ENCODE measurements at regions of chr16 and their contacts with region 1.

Region 1: DNA sequence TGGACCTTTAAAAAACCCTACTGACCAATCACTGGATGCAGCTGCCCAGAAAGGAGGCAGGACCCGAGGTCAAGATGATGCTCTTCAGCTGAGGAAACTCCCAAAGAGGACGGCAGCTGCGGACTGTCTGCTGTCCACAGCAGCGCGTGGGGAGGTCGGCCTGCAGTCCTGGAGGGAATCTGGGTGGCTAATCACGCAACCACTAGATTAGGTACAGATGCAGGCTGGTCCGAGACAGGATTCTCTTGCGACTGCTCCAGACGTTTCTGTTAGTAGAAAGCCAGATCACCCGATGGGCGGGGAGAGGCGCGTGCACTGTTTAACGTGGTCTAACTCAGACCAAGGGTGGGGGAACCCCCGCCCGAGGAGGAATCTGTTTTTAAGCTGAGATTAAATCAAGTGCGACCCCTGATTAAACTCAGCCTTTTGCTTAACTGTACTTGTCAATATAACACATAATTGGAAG is 8.8 kb downstream of the CTRB2 start:
- DNase-seq: no peak
- ATAC-seq: no peak; the same call in 1 of the 2 replicates
- H3K4me3 Mint-ChIP-seq: no peak overlapping the region
- H3K27ac Mint-ChIP-seq: no peak overlapping the region
- H3K4me1 Mint-ChIP-seq: peaks cover 9% of the 10 kb centered on the region
- H3K27me3 Mint-ChIP-seq: no peaks in the 10 kb centered on the region; the same call in 1 of the 2 replicates
- CTCF ChIP-seq: no peak

Region 2: DNA sequence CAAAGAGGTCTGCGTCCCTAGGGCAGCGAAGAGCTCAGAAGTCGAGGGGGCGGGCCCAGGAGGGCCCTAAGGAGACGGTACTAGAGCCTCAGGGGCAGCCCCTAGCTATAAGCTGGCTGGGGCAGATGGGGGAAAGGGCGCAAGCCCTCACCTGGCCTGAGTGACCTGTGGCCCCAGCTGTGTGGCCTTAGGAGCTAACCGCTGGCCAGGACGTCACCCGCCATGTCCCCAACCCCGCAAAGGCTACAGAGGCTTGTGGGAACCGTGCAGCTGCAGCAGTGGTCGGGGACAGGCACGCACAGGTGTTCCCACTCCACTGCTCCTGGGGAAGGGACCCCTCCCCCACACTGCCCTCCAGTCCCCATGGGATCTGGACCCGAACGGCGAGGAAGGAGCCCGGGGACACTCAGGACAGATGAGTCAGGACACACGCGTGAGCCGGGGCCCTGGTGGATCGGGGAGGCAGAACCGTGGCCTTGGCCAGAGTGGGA is 10.8 kb after region 1 on chr16:
- CTCF ChIA-PET with region 1: interaction called, 14 read pairs
- POLR2A ChIA-PET with region 1: no interaction called
- DNase-seq: no peak
- ATAC-seq: peak; percentile 22
- H3K4me3 Mint-ChIP-seq: no peak overlapping the region
- H3K27ac Mint-ChIP-seq: no peak overlapping the region
- H3K4me1 Mint-ChIP-seq: no peaks in the 10 kb centered on the region
- H3K27me3 Mint-ChIP-seq: no peaks in the 10 kb centered on the region
- CTCF ChIP-seq: no peak

Region 3: GRCh38 chr16:75379911-75380847 is 182.0 kb after region 1 on chr16:
- CTCF ChIA-PET with region 1: interaction called, 47 read pairs
- POLR2A ChIA-PET with region 1: interaction called, 3 read pairs
- DNase-seq: no peak
- ATAC-seq: no peak
- H3K4me3 Mint-ChIP-seq: no peak overlapping the region
- H3K27ac Mint-ChIP-seq: peak overlapping the region; percentile 50
- H3K4me1 Mint-ChIP-seq: peaks cover 17% of the 10 kb centered on the region
- H3K27me3 Mint-ChIP-seq: no peaks in the 10 kb centered on the region
- CTCF ChIP-seq: no peak

Region 4: GRCh38 chr16:75432828-75433731 is 234.9 kb after region 1 on chr16 and contains the start of gene CFDP1:
- CTCF ChIA-PET with region 1: interaction called, 10 read pairs
- POLR2A ChIA-PET with region 1: no interaction called
- DNase-seq: peak; percentile 97
- ATAC-seq: peak; percentile 87
- H3K4me3 Mint-ChIP-seq: peak within 1 kb of the TSS; percentile 79
- H3K27ac Mint-ChIP-seq: peak within 1 kb of the TSS; percentile 97
- H3K4me1 Mint-ChIP-seq: peaks cover 22% of the 10 kb centered on the region
- H3K27me3 Mint-ChIP-seq: peaks cover 8% of the 10 kb centered on the region
- CTCF ChIP-seq: no peak
- total RNA-seq, gene CFDP1: 79.2 to 102 TPM (median 98.0 TPM) in 3 replicates